Stomach (tissue), 19 donors: ENCODE measurements at regions of chr17 and their contacts with region 1.

Region 1: GRCh38 chr17:43940630-43941029 is 1.6 kb downstream of the PPY start:
- DNase-seq: peak in 1 of 2 donors; percentile 72
- H3K4me3 ChIP-seq: no peak overlapping the region
- H3K27ac ChIP-seq: no peak overlapping the region
- H3K4me1 ChIP-seq: peaks cover 8 to 12% (median 11%) of the 10 kb centered on the region in 4 donors
- H3K27me3 ChIP-seq: peaks cover 0 to 43% (median 23%) of the 10 kb centered on the region in 3 donors
- CTCF ChIP-seq: peak in 2 of 7 experiments; percentile 10 to 12
- EP300 ChIP-seq: no peak
- POLR2A ChIP-seq: no peak

Region 2: DNA sequence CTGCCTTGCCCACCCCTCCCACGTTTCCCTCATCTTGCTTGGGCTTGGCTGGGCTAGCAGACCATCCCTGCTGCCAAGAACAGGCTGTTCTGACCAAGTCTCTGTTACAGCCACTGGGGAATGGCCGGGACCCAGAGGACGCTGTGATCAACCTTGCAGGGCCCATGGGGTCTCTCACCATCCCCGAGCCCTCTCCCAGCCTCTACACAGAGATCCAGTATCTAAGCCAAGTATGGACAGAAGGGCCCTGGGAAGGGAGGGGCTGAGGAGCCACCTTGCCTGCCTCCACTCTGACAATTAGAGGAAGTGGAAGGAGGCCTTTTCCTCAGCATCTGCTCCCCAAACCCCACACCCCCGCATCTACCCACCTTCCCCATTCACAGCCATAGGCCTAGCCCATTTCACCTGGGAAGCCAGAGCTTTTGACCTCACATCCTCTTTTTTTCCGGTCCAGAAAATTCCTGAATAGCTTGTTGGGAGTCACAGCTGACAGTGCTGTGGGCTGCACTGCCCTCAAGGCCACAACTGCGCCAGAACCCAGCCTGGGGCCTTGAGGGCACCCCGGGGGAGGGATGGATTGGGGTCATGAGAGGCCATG is 79.5 kb before region 1 on chr17:
- intact Hi-C with region 1: no loop called
- DNase-seq: no peak
- H3K4me3 ChIP-seq: no peak overlapping the region
- H3K27ac ChIP-seq: peak overlapping the region in 3 of 5 donors; percentile 4 to 24 (median 23)
- H3K4me1 ChIP-seq: no peaks in the 10 kb centered on the region
- H3K27me3 ChIP-seq: peaks cover 0 to 27% (median 0%) of the 10 kb centered on the region in 3 donors
- CTCF ChIP-seq: no peak
- EP300 ChIP-seq: no peak
- POLR2A ChIP-seq: no peak

Region 3: GRCh38 chr17:43994272-43995149 is 53.9 kb after region 1 on chr17:
- intact Hi-C with region 1: loop called (anchors 5 kb)
- DNase-seq: peak; percentile 72 to 84
- H3K4me3 ChIP-seq: peak overlapping the region; percentile 25 to 41 (median 34)
- H3K27ac ChIP-seq: no peak overlapping the region
- H3K4me1 ChIP-seq: peaks cover 8 to 15% (median 11%) of the 10 kb centered on the region in 4 donors
- H3K27me3 ChIP-seq: peaks cover 0 to 20% (median 0%) of the 10 kb centered on the region in 3 donors
- CTCF ChIP-seq: peak in 5 of 7 experiments; percentile 83 to 90 (median 89)
- EP300 ChIP-seq: no peak
- POLR2A ChIP-seq: no peak

Region 4: DNA sequence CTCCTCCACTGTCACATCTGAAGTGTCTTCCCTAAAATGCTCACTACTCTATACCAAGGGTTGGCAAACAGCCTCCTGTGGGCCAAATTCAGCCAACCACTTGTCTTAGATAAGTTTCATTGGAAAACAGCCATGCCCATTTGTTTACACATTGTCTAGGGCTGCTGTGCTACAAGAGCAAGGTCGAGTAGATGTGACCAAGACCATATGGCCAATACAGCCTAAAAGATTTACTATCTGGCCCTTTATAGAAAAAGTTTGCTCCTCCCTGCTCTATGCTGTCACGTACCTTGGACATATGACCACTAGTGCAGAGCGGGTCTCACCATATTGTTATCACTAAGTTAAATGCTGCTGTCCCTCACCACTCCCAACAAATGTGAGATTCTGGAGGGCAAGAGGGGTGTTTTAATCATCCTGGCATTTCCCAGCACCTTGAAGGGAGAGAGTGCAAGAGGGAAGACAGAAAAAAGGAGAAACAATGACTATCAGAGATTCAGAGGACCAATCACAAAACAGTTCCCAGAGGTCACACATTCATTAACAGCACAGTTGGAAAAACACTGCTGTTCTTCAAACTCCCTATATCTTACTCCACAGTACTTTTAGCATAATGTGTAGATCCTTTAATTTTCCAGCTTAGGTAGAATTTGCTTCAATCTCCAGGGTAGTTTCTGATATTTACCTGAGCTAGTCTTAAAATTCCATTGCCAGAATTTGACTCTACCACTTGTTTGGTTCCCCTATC is 112.7 kb after region 1 on chr17:
- intact Hi-C with region 1: no loop called
- DNase-seq: peak in 1 of 2 donors; percentile 49
- H3K4me3 ChIP-seq: no peak overlapping the region
- H3K27ac ChIP-seq: peak overlapping the region in 1 of 5 donors; percentile 11
- H3K4me1 ChIP-seq: peaks cover 5 to 24% (median 18%) of the 10 kb centered on the region in 4 donors
- H3K27me3 ChIP-seq: no peaks in the 10 kb centered on the region
- CTCF ChIP-seq: no peak
- EP300 ChIP-seq: no peak
- POLR2A ChIP-seq: no peak